ENCODE measurements at regions of chr2 and their contacts with region 1.

Region 1: DNA sequence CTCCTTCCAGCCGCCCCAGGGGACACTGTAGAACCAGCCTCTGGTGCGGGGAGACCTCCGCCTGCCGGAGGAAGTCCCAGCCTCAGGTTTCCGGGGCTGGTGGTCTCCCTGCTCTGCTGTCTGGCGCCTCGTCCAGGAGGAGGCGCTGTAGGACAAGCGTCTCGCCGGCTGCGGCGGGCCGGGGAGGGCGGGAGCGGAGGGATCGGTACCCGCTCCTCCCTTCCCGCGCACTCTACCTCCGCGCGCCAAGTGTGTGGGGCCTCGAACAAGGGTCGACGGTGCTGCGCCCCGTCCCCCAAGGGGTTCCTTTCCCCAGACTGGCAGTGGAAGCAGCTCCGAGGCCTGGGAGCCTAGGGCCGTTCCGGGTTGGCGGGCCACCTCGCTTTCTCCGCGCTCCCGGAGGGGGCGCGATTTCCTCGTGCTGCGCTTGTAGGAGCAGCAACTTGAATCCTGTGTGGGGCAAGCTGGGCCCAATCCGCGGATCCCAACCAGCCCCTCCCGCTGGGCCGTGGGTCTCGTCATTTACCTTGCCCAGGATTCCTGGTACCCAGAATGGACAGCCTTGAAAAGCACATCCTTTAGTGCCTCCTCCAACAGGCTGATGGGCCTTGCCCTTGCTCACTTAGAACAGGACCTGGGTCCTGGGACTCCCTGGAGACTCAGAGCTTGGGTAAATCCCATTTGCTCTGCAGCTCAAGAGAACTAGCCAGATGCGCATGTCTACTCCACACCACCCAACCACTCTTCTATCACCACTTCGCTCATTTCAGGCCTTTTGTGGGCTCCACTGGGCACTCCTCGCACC is 10.6 kb upstream of the HOXD4 start:
- DNase-seq: peak; percentile 24
- ATAC-seq: peak; percentile 99
- H3K4me3 ChIP-seq: peak overlapping the region; percentile 37; the same call in 1 of the 2 replicates
- H3K27ac ChIP-seq: no peak overlapping the region
- H3K4me1 ChIP-seq: no peaks in the 10 kb centered on the region
- H3K27me3 ChIP-seq: peaks cover 0 to 11% of the 10 kb centered on the region in 2 experiments
- CTCF ChIP-seq: peak; percentile 75 to 93 (median 92)
- EP300 ChIP-seq: no peak
- POLR2A ChIP-seq: no peak; the same call in 1 of the 2 replicates
- RAD21 ChIP-seq: peak; percentile 95

Region 2: DNA sequence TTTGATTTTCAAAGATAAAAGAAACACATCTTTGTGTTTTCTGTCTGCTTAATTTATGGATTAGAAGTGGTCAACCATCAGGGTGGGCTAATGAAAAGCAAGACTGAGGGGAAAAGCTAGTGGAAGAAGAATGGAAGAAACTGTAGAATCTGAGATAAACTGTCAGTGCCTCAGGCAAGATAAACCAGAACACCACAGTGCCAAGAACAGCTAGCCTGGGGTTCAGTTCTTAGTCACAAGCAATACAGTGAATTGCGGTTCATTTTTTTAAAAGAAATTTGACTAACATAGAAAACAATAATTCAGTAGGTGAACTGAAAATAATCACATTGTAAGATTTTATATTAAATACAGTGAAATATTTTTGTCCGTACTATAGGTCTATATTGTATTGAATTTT is 116.6 kb before region 1 on chr2:
- CTCF ChIA-PET with region 1: no interaction called
- POLR2A ChIA-PET with region 1: no interaction called
- RAD21 ChIA-PET with region 1: no interaction called
- SMC1A ChIA-PET with region 1: no interaction called
- in situ Hi-C with region 1: no loop called
- intact Hi-C with region 1: no loop called
- DNase-seq: no peak
- ATAC-seq: no peak
- H3K4me3 ChIP-seq: no peak overlapping the region
- H3K27ac ChIP-seq: no peak overlapping the region
- H3K4me1 ChIP-seq: no peaks in the 10 kb centered on the region
- H3K27me3 ChIP-seq: peaks cover 0 to 3% of the 10 kb centered on the region in 2 experiments; a peak in 2 of 4 replicates
- CTCF ChIP-seq: no peak
- EP300 ChIP-seq: no peak
- POLR2A ChIP-seq: no peak
- RAD21 ChIP-seq: no peak

Region 3: GRCh38 chr2:176212276-176212675 is 71.6 kb after region 1 on chr2:
- CTCF ChIA-PET with region 1: no interaction called
- POLR2A ChIA-PET with region 1: no interaction called
- RAD21 ChIA-PET with region 1: no interaction called
- SMC1A ChIA-PET with region 1: no interaction called
- in situ Hi-C with region 1: no loop called
- intact Hi-C with region 1: no loop called
- DNase-seq: no peak
- ATAC-seq: no peak
- H3K4me3 ChIP-seq: no peak overlapping the region
- H3K27ac ChIP-seq: no peak overlapping the region
- H3K4me1 ChIP-seq: no peaks in the 10 kb centered on the region
- H3K27me3 ChIP-seq: no peaks in the 10 kb centered on the region; a peak in 1 of 4 replicates
- CTCF ChIP-seq: no peak
- EP300 ChIP-seq: no peak
- POLR2A ChIP-seq: no peak
- RAD21 ChIP-seq: no peak

Region 4: GRCh38 chr2:176380341-176380740 is 239.6 kb after region 1 on chr2:
- CTCF ChIA-PET with region 1: no interaction called
- POLR2A ChIA-PET with region 1: no interaction called
- RAD21 ChIA-PET with region 1: no interaction called
- SMC1A ChIA-PET with region 1: no interaction called
- in situ Hi-C with region 1: no loop called
- intact Hi-C with region 1: loop called (anchors 5 kb)
- DNase-seq: no peak
- ATAC-seq: no peak
- H3K4me3 ChIP-seq: no peak overlapping the region
- H3K27ac ChIP-seq: no peak overlapping the region
- H3K4me1 ChIP-seq: no peaks in the 10 kb centered on the region
- H3K27me3 ChIP-seq: no peaks in the 10 kb centered on the region
- CTCF ChIP-seq: no peak
- EP300 ChIP-seq: no peak
- POLR2A ChIP-seq: no peak
- RAD21 ChIP-seq: no peak

Region 5: DNA sequence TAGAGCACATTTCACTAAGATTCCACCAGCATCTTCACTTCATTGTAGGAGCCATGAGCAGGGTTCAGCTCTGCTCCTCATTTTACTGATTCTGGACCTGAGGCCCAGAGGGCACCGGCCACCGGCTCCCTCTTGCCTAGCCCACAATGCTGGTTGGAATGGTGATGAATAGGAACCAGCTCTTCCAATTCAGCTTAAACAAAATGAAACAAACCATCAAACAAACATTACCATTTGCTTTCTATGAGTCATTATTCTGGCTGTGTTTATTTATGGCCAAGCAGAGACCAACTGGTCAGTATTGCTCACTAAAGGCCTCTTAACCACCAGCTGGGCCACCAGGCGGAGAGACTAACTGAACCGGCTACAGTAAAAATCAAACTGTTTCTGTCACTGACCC is 305.2 kb after region 1 on chr2:
- CTCF ChIA-PET with region 1: interaction called, 157 read pairs
- POLR2A ChIA-PET with region 1: no interaction called
- RAD21 ChIA-PET with region 1: interaction called, 15 read pairs
- SMC1A ChIA-PET with region 1: interaction called, 3 read pairs
- in situ Hi-C with region 1: no loop called
- intact Hi-C with region 1: no loop called
- DNase-seq: no peak
- ATAC-seq: no peak
- H3K4me3 ChIP-seq: no peak overlapping the region
- H3K27ac ChIP-seq: no peak overlapping the region
- H3K4me1 ChIP-seq: no peaks in the 10 kb centered on the region
- H3K27me3 ChIP-seq: no peaks in the 10 kb centered on the region
- CTCF ChIP-seq: no peak
- EP300 ChIP-seq: no peak
- POLR2A ChIP-seq: no peak
- RAD21 ChIP-seq: no peak

Region 6: GRCh38 chr2:176565641-176566323 is 425.1 kb after region 1 on chr2:
- CTCF ChIA-PET with region 1: interaction called, 17 read pairs
- POLR2A ChIA-PET with region 1: no interaction called
- RAD21 ChIA-PET with region 1: no interaction called
- SMC1A ChIA-PET with region 1: interaction called, 5 read pairs
- in situ Hi-C with region 1: no loop called
- intact Hi-C with region 1: no loop called
- DNase-seq: no peak
- ATAC-seq: no peak
- H3K4me3 ChIP-seq: no peak overlapping the region
- H3K27ac ChIP-seq: no peak overlapping the region
- H3K4me1 ChIP-seq: no peaks in the 10 kb centered on the region
- H3K27me3 ChIP-seq: no peaks in the 10 kb centered on the region; a peak in 1 of 4 replicates
- CTCF ChIP-seq: no peak
- EP300 ChIP-seq: no peak
- POLR2A ChIP-seq: no peak
- RAD21 ChIP-seq: no peak

Region 7: GRCh38 chr2:176638167-176639015 is 497.7 kb after region 1 on chr2:
- CTCF ChIA-PET with region 1: interaction called, 35 read pairs
- POLR2A ChIA-PET with region 1: no interaction called
- RAD21 ChIA-PET with region 1: interaction called, 28 read pairs
- SMC1A ChIA-PET with region 1: interaction called, 7 read pairs
- in situ Hi-C with region 1: no loop called
- intact Hi-C with region 1: loop called (anchors 1 kb)
- DNase-seq: no peak
- ATAC-seq: peak; percentile 93
- H3K4me3 ChIP-seq: peak overlapping the region; percentile 64
- H3K27ac ChIP-seq: no peak overlapping the region
- H3K4me1 ChIP-seq: no peaks in the 10 kb centered on the region
- H3K27me3 ChIP-seq: peaks cover 2 to 8% of the 10 kb centered on the region in 2 experiments
- CTCF ChIP-seq: peak; percentile 68 to 74 (median 70)
- EP300 ChIP-seq: no peak
- POLR2A ChIP-seq: no peak
- RAD21 ChIP-seq: peak; percentile 73

Measured in GM12878 (cell line).